Activated naive CD4-positive, alpha-beta T cell treated with anti-CD3 and anti-CD28 coated beads for 36 hours (primary cell): ENCODE measurements at regions of chr22 and their contacts with region 1.

Region 1: GRCh38 chr22:37199103-37199759 is 11.2 kb upstream of the C1QTNF6 start:
- DNase-seq: peak; percentile 100
- H3K4me3 Mint-ChIP-seq: peak overlapping the region; percentile 81
- H3K27ac Mint-ChIP-seq: peak overlapping the region; percentile 96
- H3K4me1 Mint-ChIP-seq: peaks cover 48% of the 10 kb centered on the region
- H3K27me3 Mint-ChIP-seq: no peaks in the 10 kb centered on the region

Region 2: GRCh38 chr22:36781656-36782627 is 417.3 kb before region 1 on chr22:
- CTCF ChIA-PET with region 1: no interaction called
- intact Hi-C with region 1: loop called (anchors 2 kb)
- DNase-seq: peak; percentile 94
- H3K4me3 Mint-ChIP-seq: peak overlapping the region; percentile 28
- H3K27ac Mint-ChIP-seq: peak overlapping the region; percentile 72
- H3K4me1 Mint-ChIP-seq: peaks cover 26% of the 10 kb centered on the region
- H3K27me3 Mint-ChIP-seq: peaks cover 3% of the 10 kb centered on the region

Region 3: DNA sequence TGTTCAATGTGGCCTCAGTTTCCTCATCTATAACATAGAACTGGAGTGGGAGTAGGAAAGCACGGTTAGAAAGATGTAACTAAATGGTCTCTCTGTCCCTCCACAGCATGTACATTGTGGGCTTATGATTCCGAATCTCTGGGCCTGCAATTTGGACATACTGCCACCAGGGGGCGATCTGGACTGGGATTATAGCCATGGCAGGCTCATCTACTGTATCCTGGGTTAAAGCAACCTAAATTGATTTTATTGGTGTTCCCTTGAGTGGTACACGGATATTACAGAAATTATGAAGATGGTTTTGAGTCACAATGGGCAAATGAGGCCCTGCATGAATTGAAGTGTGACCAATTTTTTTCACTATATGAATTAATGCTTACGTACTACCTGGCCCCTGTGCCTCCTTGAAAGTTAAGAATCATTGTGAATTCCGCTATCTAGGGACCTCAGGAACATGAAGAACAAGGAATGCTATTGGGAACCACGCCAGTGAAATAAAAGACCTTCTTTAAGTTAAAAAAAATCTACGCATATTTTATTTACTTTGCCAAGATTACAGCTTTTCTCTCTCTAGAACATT is 212.9 kb before region 1 on chr22:
- CTCF ChIA-PET with region 1: interaction called, 3 read pairs
- intact Hi-C with region 1: loop called (anchors 1 kb)
- DNase-seq: peak; percentile 79
- H3K4me3 Mint-ChIP-seq: no peak overlapping the region
- H3K27ac Mint-ChIP-seq: no peak overlapping the region
- H3K4me1 Mint-ChIP-seq: no peaks in the 10 kb centered on the region
- H3K27me3 Mint-ChIP-seq: peaks cover 18% of the 10 kb centered on the region

Region 4: DNA sequence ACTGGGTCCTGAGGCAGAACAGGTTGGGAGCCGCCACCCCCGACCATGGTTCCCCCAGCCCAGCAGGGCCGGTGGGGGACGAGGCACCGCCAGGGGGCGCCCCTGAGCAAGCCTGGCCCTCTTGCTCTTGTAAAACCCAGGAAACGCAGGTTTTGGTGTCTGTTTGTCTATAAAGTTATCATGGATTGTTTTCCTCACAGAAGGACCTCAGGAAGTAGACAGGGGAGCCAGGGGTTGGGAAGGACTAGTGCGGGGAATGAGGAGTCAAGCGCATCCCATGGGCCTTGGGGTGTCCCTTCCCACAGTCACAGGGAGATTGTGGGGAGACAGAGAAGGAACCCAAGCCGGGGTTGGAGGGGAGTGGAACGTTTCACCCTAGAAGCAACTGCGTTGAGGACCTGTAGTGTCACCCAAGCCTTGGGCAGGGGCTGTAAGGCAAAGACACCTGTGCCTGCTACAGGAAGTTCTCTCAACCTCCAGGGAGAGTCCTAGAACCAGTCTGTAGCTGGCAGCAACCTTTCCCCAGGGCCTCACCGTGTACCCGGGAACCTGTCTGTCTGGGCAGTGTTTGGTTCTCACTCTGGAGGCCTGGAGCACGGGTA is 121.2 kb before region 1 on chr22:
- CTCF ChIA-PET with region 1: interaction called, 38 read pairs
- intact Hi-C with region 1: loop called (anchors 1 kb)
- DNase-seq: peak; percentile 91
- H3K4me3 Mint-ChIP-seq: peak overlapping the region; percentile 12
- H3K27ac Mint-ChIP-seq: peak overlapping the region; percentile 97
- H3K4me1 Mint-ChIP-seq: peaks cover 53% of the 10 kb centered on the region
- H3K27me3 Mint-ChIP-seq: peaks cover 4% of the 10 kb centered on the region

Region 5: GRCh38 chr22:37148742-37149665 is 50.2 kb before region 1 on chr22:
- CTCF ChIA-PET with region 1: interaction called, 10 read pairs
- intact Hi-C with region 1: loop called (anchors 5 kb)
- DNase-seq: no peak
- H3K4me3 Mint-ChIP-seq: peak overlapping the region; percentile 87
- H3K27ac Mint-ChIP-seq: peak overlapping the region; percentile 96
- H3K4me1 Mint-ChIP-seq: peaks cover 53% of the 10 kb centered on the region
- H3K27me3 Mint-ChIP-seq: no peaks in the 10 kb centered on the region

Region 6: DNA sequence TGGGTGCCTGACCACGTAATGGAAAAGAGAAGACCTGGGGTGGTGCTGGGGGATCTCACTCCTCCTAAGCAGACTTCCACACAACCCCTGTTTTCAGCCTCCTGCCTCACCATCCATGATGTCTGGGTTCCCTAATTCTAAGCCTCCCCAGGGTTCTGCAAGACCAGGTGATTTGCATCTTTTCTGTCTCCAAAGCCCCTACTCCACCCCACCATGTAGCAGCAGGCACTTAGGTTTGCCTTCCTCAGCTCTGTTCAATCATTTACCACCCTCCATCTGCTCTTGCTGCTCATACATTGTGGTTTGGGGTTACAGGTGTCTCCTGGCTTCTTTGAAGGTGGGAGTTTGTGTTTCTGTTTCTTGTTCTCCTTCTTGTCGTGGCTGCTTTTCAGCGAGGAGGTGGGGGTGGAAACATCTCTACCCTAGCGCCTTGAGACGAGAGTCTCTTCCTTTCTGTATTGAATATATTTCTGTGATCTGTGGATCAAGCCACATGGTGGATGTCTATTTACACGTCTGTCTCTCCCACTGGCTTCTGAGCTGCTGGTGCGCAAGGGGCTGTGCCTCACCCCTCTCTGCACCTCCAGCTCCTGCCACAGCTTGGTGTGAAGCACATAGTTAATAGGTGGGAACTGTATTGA is 19.7 kb after region 1 on chr22:
- CTCF ChIA-PET with region 1: interaction called, 15 read pairs
- intact Hi-C with region 1: loop called (anchors 1 kb)
- DNase-seq: peak; percentile 86
- H3K4me3 Mint-ChIP-seq: peak overlapping the region; percentile 88
- H3K27ac Mint-ChIP-seq: peak overlapping the region; percentile 98
- H3K4me1 Mint-ChIP-seq: peaks cover 75% of the 10 kb centered on the region
- H3K27me3 Mint-ChIP-seq: no peaks in the 10 kb centered on the region

Region 7: GRCh38 chr22:37244114-37244921 is 45.1 kb after region 1 on chr22 and contains the start of gene RAC2:
- CTCF ChIA-PET with region 1: interaction called, 8 read pairs
- intact Hi-C with region 1: loop called (anchors 1 kb)
- DNase-seq: peak; percentile 94
- H3K4me3 Mint-ChIP-seq: peak within 1 kb of the TSS; percentile 99
- H3K27ac Mint-ChIP-seq: peak within 1 kb of the TSS; percentile 99
- H3K4me1 Mint-ChIP-seq: peaks cover 38% of the 10 kb centered on the region
- H3K27me3 Mint-ChIP-seq: no peaks in the 10 kb centered on the region
- total RNA-seq, gene RAC2: 728 to 759 TPM